ENCODE measurements at regions of chr18 and their contacts with region 1.

Region 1: GRCh38 chr18:63422087-63422809 is at the start of gene VPS4B:
- DNase-seq: peak; percentile 100
- ATAC-seq: peak; percentile 99
- H3K4me3 ChIP-seq: peak within 1 kb of the TSS; percentile 83 to 92
- H3K27ac ChIP-seq: peak within 1 kb of the TSS; percentile 91 to 92
- H3K4me1 ChIP-seq: peaks cover 7 to 36% of the 10 kb centered on the region in 2 donors
- H3K27me3 ChIP-seq: no peaks in the 10 kb centered on the region
- CTCF ChIP-seq: no peak
- polyA plus RNA-seq, gene VPS4B: 48.2 to 55.9 (median 53.1) TPM

Region 2: GRCh38 chr18:63367053-63367953 is 54.9 kb before region 1 on chr18 and contains the start of gene KDSR:
- intact Hi-C with region 1: loop called in 1 of 2 experiments (anchors 10 kb)
- DNase-seq: peak; percentile 97 to 99 (median 98)
- ATAC-seq: peak; percentile 97
- H3K4me3 ChIP-seq: peak within 1 kb of the TSS; percentile 69 to 85
- H3K27ac ChIP-seq: peak within 1 kb of the TSS; percentile 92 to 99
- H3K4me1 ChIP-seq: peaks cover 0 to 31% of the 10 kb centered on the region in 2 donors
- H3K27me3 ChIP-seq: no peaks in the 10 kb centered on the region
- CTCF ChIP-seq: no peak
- polyA plus RNA-seq, gene KDSR: 41.1 to 44.1 (median 42.0) TPM